ENCODE measurements at regions of chr7 and their contacts with region 1.

Region 1: GRCh38 chr7:30062591-30062990 is 34.4 kb downstream of the PLEKHA8 start:
- DNase-seq: peak; percentile 66
- H3K4me3 ChIP-seq: no peak overlapping the region
- H3K27ac ChIP-seq: no peak overlapping the region
- H3K4me1 ChIP-seq: no peaks in the 10 kb centered on the region
- H3K27me3 ChIP-seq: no peaks in the 10 kb centered on the region
- CTCF ChIP-seq: peak; percentile 96
- EP300 ChIP-seq: no peak
- RAD21 ChIP-seq: peak; percentile 86

Region 2: DNA sequence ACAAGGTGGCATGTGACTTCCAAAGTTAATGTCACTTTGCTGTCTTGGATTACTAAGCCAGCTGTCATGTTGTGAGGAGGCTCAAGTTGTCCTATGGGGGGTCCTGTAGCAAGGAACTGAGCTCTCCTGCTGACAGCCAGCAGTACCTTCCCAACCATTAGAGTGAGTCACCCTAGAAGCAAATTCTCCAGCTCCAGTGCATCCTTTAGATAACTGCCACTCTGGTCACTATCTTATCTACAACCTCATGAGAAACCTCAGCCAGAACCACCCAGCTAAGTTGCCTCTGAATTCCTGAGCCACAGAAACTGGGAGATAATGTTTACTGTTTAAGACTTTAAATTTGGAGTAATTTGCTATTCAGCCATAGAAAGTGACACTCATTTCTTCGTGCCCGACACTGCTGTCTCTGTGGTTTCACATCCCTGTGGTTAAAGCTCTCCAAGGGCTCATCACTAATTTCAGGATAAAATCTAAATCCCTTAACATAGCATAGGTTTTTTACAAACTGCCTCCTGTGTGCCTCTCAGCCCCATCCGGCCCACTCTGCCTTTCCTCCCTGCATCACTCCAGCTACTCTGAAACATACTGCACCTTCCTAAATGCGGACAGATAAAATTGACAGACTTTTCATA is 415.5 kb before region 1 on chr7:
- CTCF ChIA-PET with region 1: no interaction called
- POLR2A ChIA-PET with region 1: no interaction called
- DNase-seq: no peak
- H3K4me3 ChIP-seq: no peak overlapping the region
- H3K27ac ChIP-seq: no peak overlapping the region
- H3K4me1 ChIP-seq: no peaks in the 10 kb centered on the region; a peak in 1 of 4 replicates
- H3K27me3 ChIP-seq: no peaks in the 10 kb centered on the region
- CTCF ChIP-seq: no peak
- EP300 ChIP-seq: no peak
- RAD21 ChIP-seq: no peak

Region 3: GRCh38 chr7:29878081-29878688 is 184.4 kb before region 1 on chr7:
- CTCF ChIA-PET with region 1: interaction called, 51 read pairs
- POLR2A ChIA-PET with region 1: no interaction called
- DNase-seq: peak; percentile 79
- H3K4me3 ChIP-seq: no peak overlapping the region
- H3K27ac ChIP-seq: no peak overlapping the region
- H3K4me1 ChIP-seq: peaks cover 0 to 2% of the 10 kb centered on the region in 2 experiments; a peak in 1 of 4 replicates
- H3K27me3 ChIP-seq: no peaks in the 10 kb centered on the region
- CTCF ChIP-seq: peak; percentile 95
- EP300 ChIP-seq: no peak
- RAD21 ChIP-seq: peak; percentile 97

Region 4: GRCh38 chr7:29988424-29989256 is 74.0 kb before region 1 on chr7:
- CTCF ChIA-PET with region 1: interaction called, 21 read pairs
- POLR2A ChIA-PET with region 1: no interaction called
- DNase-seq: peak; percentile 83
- H3K4me3 ChIP-seq: peak overlapping the region; percentile 87
- H3K27ac ChIP-seq: peak overlapping the region; percentile 88 to 90
- H3K4me1 ChIP-seq: peaks cover 6 to 10% of the 10 kb centered on the region in 2 experiments; a peak in 2 of 4 replicates
- H3K27me3 ChIP-seq: no peaks in the 10 kb centered on the region
- CTCF ChIP-seq: no peak
- EP300 ChIP-seq: no peak
- RAD21 ChIP-seq: no peak

Region 5: DNA sequence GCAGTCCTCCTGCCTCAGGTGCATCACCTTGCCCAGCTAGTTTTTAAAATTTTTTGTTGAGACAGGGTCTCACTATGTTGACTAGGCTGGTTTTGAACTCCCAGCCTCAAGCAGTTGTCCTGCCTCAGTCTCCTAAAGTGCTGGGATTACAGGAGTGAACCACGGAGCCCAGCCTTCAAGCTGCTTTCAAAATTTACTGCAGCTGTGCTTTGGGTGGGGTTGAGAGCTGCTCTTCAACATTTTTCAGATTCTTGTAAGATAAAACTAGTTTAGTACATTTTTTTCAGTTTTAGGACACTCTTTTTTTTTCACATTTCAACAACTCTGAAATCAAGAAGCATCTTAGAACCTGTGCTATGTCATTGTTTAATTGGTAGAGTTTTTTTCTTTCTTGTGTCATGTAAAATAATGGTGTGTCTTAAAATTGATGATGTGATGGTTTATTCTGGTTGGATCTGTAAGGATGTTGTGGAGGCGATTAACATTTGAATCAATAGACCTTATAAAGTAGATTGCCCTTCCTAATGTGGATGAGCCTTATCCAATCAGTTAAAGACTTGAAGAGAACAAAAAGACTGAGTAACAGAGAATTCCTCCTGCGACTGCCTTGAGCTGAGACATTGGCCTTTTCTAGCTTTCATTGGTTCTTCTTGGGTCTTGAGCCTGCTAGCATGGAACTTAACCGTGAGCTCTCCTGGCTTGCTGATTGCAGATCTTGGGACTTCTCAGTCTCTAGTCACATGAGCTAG is 20.9 kb before region 1 on chr7:
- CTCF ChIA-PET with region 1: interaction called, 85 read pairs
- POLR2A ChIA-PET with region 1: no interaction called
- DNase-seq: no peak
- H3K4me3 ChIP-seq: no peak overlapping the region
- H3K27ac ChIP-seq: 0 out of 4 replicates have a peak overlapping the region, but pooled peaks of 1 of the 2 experiments have one; percentile 12
- H3K4me1 ChIP-seq: peaks cover 8% of the 10 kb centered on the region in 2 experiments; a peak in 2 of 4 replicates
- H3K27me3 ChIP-seq: no peaks in the 10 kb centered on the region
- CTCF ChIP-seq: no peak
- EP300 ChIP-seq: no peak
- RAD21 ChIP-seq: no peak

Region 6: DNA sequence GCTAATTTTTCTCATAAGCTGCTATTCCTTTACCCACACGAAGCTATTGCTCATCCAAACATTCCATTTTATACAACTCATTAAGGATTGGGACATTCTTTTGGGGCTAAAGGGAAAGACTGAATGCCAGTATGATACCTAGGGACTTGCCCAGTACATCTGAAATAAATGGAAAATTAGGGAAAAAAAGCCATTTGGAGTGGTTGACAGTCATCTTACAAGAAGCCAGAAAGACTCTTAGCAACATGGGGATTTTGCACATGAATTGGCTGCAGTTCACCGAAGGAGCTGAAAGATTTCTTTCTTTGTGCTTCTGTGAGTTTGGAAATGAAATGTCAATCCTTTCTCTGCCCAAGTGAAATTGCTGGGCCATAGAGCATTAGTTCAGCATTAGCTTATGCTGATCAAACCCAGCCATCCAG is 28.9 kb after region 1 on chr7:
- CTCF ChIA-PET with region 1: interaction called, 47 read pairs
- POLR2A ChIA-PET with region 1: no interaction called
- DNase-seq: no peak
- H3K4me3 ChIP-seq: no peak overlapping the region
- H3K27ac ChIP-seq: peak overlapping the region in 1 of 2 experiments; percentile 74; a peak in 3 of 4 replicates
- H3K4me1 ChIP-seq: peaks cover 0 to 8% of the 10 kb centered on the region in 2 experiments; a peak in 2 of 4 replicates
- H3K27me3 ChIP-seq: no peaks in the 10 kb centered on the region
- CTCF ChIP-seq: no peak
- EP300 ChIP-seq: 0 out of 4 replicates have a peak, but pooled peaks of 1 of the 2 experiments have one; percentile 45
- RAD21 ChIP-seq: no peak

Region 7: DNA sequence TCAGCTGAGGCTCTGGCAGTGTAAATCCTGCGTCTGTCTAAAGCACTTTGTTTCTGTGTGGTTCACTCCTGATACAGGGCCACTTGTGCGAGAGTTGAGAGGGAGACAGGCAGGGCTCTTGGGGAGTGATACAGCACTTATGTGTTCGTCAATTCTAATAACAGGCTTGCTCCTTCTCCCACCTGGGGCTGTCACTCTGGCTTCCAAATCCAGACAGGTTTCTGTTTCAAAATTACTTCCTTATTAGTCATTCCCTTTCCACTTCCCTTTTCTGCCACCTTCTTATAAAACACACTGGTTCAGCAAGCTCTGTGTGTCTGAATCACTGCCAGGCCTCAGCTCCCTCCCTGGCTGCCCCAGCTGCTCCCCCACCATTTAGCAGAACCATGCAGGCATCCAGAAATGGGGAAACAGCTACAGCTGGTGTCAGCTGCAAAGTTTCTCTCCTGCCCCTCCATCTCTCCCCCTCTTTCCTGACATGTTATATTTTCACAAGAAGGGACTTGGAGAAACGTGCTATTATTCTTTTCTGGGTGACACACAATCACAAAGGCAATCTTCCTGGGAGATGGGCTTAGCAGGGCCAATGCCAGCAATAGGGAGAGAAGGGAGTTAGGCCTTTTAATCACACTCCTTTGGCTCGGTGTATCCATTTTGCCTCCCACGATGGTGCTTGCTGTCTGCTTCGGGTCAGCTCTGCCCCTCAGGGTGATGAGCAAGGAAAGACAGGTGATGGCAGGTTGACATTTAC is 163.4 kb after region 1 on chr7:
- CTCF ChIA-PET with region 1: no interaction called
- POLR2A ChIA-PET with region 1: no interaction called
- DNase-seq: peak; percentile 32
- H3K4me3 ChIP-seq: no peak overlapping the region
- H3K27ac ChIP-seq: peak overlapping the region in 1 of 2 experiments; percentile 79; a peak in 2 of 4 replicates
- H3K4me1 ChIP-seq: peaks cover 9 to 24% of the 10 kb centered on the region in 2 experiments; a peak in 2 of 4 replicates
- H3K27me3 ChIP-seq: no peaks in the 10 kb centered on the region
- CTCF ChIP-seq: no peak
- EP300 ChIP-seq: no peak
- RAD21 ChIP-seq: no peak

Region 8: GRCh38 chr7:30800785-30801252 is 738.2 kb after region 1 on chr7:
- CTCF ChIA-PET with region 1: no interaction called
- POLR2A ChIA-PET with region 1: no interaction called
- DNase-seq: peak; percentile 89
- H3K4me3 ChIP-seq: no peak overlapping the region
- H3K27ac ChIP-seq: peak overlapping the region in 1 of 2 experiments; percentile 4; a peak in 2 of 4 replicates
- H3K4me1 ChIP-seq: peaks cover 24 to 51% of the 10 kb centered on the region in 2 experiments
- H3K27me3 ChIP-seq: no peaks in the 10 kb centered on the region
- CTCF ChIP-seq: peak; percentile 96
- EP300 ChIP-seq: no peak
- RAD21 ChIP-seq: peak; percentile 100